RWPE1 (cell line): ENCODE measurements at regions of chr7 and their contacts with region 1.

Region 1: GRCh38 chr7:111855161-111855856 is 293.0 kb upstream of the IMMP2L start:
- DNase-seq: peak; percentile 27
- H3K27ac ChIP-seq: no peak overlapping the region
- CTCF ChIP-seq: peak; percentile 42

Region 2: DNA sequence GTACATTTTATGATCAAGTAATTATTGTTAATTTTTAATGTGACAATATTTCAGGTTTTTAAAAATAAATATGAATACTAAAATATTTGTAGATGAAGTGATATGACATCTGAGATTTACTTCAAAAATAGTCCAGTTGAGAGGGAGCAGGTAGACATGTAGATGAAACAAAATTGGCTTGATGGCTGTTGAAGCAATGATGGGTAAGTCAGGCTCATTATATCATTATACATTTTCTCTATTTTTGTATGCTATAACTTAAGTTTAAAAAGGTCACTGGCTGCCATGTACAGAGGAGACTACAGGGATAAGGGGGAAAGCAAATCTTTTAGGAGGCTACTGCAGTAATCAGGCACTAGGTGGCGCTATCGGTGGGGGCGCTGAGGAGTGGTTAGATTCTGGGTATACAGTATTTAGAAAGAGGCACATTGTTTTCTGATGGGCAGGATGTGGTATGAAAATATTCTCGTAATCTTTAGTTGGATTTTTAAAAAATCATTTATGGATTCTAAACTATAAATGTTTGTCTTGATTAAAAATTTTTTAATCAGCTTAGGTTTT is 103.2 kb before region 1 on chr7:
- CTCF ChIA-PET with region 1: interaction called, 15 read pairs
- POLR2A ChIA-PET with region 1: no interaction called
- DNase-seq: peak; percentile 63
- H3K27ac ChIP-seq: no peak overlapping the region
- CTCF ChIP-seq: peak; percentile 97

Region 3: GRCh38 chr7:111763221-111763801 is 92.0 kb before region 1 on chr7:
- CTCF ChIA-PET with region 1: interaction called, 22 read pairs
- POLR2A ChIA-PET with region 1: no interaction called
- DNase-seq: peak; percentile 62
- H3K27ac ChIP-seq: no peak overlapping the region
- CTCF ChIP-seq: peak; percentile 77

Region 4: GRCh38 chr7:112006071-112006470 is 150.8 kb after region 1 on chr7:
- CTCF ChIA-PET with region 1: no interaction called
- POLR2A ChIA-PET with region 1: no interaction called
- DNase-seq: no peak
- H3K27ac ChIP-seq: no peak overlapping the region
- CTCF ChIP-seq: no peak